ENCODE measurements at regions of chr18 and their contacts with region 1.

Region 1: DNA sequence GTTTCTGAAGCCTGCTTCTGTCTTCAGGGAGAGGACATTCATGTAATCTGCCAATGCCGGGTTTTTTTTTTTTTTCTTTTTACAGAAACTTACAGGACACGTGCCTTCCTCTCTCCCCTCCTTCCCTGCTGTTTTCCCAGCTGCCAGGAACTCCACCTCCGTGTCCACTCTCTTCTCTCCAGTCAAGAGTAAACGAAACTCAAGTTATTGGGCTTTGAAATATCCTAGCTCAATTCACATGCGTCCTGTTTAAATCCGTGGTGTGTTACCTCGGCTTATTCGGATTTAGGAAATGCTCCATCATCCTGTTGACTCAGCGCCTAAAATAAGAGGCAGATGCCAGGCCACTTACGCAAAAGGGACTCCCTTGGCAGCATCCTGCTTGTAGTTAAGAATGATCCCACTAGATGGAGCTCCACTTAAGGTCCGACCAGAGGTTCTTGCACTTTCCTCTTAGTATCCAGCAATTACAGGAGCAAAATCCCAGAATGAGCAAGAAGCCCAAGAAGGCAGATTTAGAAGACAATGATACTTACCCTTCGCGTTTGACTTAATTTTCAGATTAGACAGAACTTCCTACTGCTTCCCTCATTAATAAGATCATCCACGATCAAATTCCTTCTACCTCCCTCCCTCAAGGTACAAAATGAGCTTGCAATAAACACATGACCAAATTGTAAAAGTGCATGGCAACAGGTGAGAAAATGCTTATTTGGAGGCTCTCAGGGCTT is 97.2 kb upstream of the ZCCHC2 start:
- DNase-seq: peak; percentile 56
- H3K4me3 Mint-ChIP-seq: peak overlapping the region; percentile 19
- H3K27ac Mint-ChIP-seq: peak overlapping the region; percentile 69
- H3K4me1 Mint-ChIP-seq: peaks cover 44% of the 10 kb centered on the region
- H3K27me3 Mint-ChIP-seq: no peaks in the 10 kb centered on the region

Region 2: GRCh38 chr18:62281684-62282083 is 143.9 kb before region 1 on chr18:
- intact Hi-C with region 1: loop called (anchors 2 kb)
- DNase-seq: no peak
- H3K4me3 Mint-ChIP-seq: no peak overlapping the region
- H3K27ac Mint-ChIP-seq: no peak overlapping the region
- H3K4me1 Mint-ChIP-seq: peaks cover 40% of the 10 kb centered on the region
- H3K27me3 Mint-ChIP-seq: no peaks in the 10 kb centered on the region

Region 3: DNA sequence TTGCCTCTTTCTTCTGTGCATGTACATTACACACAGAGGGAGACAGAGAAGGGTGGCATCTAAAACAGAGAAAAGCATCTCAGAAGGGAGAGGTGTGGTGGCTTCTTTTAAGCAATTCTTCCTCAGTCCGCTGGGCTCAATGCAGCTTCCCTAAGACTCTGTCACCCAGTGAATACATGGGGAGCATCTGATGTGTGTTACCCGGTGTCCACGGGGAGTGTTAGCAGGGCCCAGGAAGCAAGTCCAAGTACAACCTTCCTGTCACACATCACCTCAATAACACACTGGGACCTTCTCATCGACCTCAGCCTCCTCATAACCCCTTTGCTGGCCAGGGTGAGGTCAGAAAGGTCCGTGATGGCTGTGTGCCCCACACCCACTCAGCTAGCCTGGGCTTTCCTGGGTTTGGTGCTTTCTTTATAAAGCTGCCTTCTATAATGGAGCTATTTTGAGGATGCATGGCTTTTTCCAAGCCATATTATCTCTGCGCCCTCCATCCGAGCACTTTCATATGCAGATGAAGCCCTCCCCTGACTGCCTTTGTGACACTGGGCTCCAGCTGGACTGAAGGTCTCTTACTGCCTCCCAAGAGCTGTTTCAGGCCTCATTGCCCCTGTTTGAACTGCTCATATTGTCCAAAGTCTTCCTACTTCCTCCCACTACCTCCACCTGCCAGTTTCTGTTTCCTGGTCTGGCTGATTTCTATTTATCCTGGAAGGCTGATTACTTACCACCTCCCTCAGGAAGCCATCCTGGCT is 79.1 kb before region 1 on chr18:
- intact Hi-C with region 1: loop called (anchors 2 kb)
- DNase-seq: no peak
- H3K4me3 Mint-ChIP-seq: peak overlapping the region; percentile 4
- H3K27ac Mint-ChIP-seq: peak overlapping the region; percentile 61
- H3K4me1 Mint-ChIP-seq: peaks cover 52% of the 10 kb centered on the region
- H3K27me3 Mint-ChIP-seq: peaks cover 2% of the 10 kb centered on the region

Region 4: GRCh38 chr18:62399781-62400308 is 25.8 kb before region 1 on chr18:
- intact Hi-C with region 1: loop called (anchors 1 kb)
- DNase-seq: no peak
- H3K4me3 Mint-ChIP-seq: no peak overlapping the region
- H3K27ac Mint-ChIP-seq: peak overlapping the region; percentile 75
- H3K4me1 Mint-ChIP-seq: peaks cover 54% of the 10 kb centered on the region
- H3K27me3 Mint-ChIP-seq: no peaks in the 10 kb centered on the region

Region 5: DNA sequence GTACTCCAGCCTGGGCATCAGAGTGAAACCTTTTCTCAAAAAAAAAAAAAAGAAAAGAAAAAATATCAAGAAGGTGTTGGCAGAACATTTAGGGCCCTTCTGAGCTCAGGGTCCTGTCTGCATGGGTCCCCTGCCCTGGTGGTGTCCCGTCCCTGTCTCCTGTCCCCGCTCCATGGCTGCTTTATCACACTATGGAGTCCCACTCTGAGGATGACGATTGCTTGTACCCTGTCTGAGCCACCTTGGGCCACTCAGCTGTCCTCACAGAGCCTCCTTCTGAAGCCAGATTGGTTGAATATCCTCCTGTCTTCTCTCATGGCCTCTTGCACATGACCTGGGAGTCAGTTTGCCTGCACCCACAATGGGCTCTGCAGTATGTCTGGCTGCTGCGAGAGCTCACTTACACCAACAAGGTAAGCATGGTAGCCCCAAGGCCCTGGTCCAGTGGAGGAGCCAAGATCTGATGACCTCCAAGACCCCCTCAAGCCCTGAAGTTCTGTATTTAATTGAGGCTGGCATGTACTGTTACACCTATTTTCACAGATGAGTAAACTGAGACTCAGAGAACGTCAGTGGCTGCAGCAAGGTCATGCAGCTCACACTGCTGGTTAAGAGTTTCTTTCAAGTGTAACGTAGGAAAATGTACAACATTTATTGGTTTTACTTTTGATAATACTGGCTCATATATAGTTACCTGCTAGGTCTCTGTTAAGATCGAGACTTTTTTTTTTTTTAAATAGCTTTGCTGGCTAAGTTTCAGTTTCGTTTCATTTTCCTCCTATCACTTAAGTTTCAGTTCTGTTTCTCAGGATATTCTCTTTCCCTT is 80.3 kb after region 1 on chr18:
- intact Hi-C with region 1: loop called (anchors 1 kb)
- DNase-seq: peak; percentile 25
- H3K4me3 Mint-ChIP-seq: peak overlapping the region; percentile 81
- H3K27ac Mint-ChIP-seq: peak overlapping the region; percentile 96
- H3K4me1 Mint-ChIP-seq: peaks cover 23% of the 10 kb centered on the region
- H3K27me3 Mint-ChIP-seq: peaks cover 2% of the 10 kb centered on the region